T-cell (primary cell): ENCODE measurements at regions of chr17 and their contacts with region 1.

Region 1: GRCh38 chr17:10278213-10278612 is 79.8 kb upstream of the GAS7 start:
- DNase-seq: no peak
- ATAC-seq: no peak
- H3K4me3 ChIP-seq: no peak overlapping the region
- H3K4me3 Mint-ChIP-seq: no peak overlapping the region
- H3K27ac ChIP-seq: no peak overlapping the region
- H3K27ac Mint-ChIP-seq: no peak overlapping the region
- H3K4me1 ChIP-seq: no peaks in the 10 kb centered on the region
- H3K4me1 Mint-ChIP-seq: peaks cover 0 to 14% (median 2%) of the 10 kb centered on the region in 3 donors
- H3K27me3 ChIP-seq: peaks cover 0 to 6% of the 10 kb centered on the region in 2 experiments
- H3K27me3 Mint-ChIP-seq: peaks cover 4 to 17% of the 10 kb centered on the region in 2 donors

Region 2: GRCh38 chr17:9714801-9715200 is 563.4 kb before region 1 on chr17:
- CTCF ChIA-PET with region 1: no interaction called
- POLR2A ChIA-PET with region 1: no interaction called
- DNase-seq: no peak
- ATAC-seq: no peak
- H3K4me3 ChIP-seq: no peak overlapping the region
- H3K4me3 Mint-ChIP-seq: no peak overlapping the region
- H3K27ac ChIP-seq: no peak overlapping the region
- H3K27ac Mint-ChIP-seq: no peak overlapping the region
- H3K4me1 ChIP-seq: no peaks in the 10 kb centered on the region
- H3K4me1 Mint-ChIP-seq: no peaks in the 10 kb centered on the region
- H3K27me3 ChIP-seq: peaks cover 0 to 12% of the 10 kb centered on the region in 2 experiments
- H3K27me3 Mint-ChIP-seq: peaks cover 3 to 6% of the 10 kb centered on the region in 2 donors

Region 3: GRCh38 chr17:10101291-10101690 is 176.9 kb before region 1 on chr17:
- CTCF ChIA-PET with region 1: no interaction called
- POLR2A ChIA-PET with region 1: interaction called in 1 of 2 experiments, 14 read pairs
- DNase-seq: no peak
- ATAC-seq: no peak
- H3K4me3 ChIP-seq: no peak overlapping the region
- H3K4me3 Mint-ChIP-seq: no peak overlapping the region
- H3K27ac ChIP-seq: no peak overlapping the region
- H3K27ac Mint-ChIP-seq: no peak overlapping the region
- H3K4me1 ChIP-seq: no peaks in the 10 kb centered on the region
- H3K4me1 Mint-ChIP-seq: peaks cover 5 to 8% (median 6%) of the 10 kb centered on the region in 3 donors
- H3K27me3 ChIP-seq: peaks cover 0 to 2% of the 10 kb centered on the region in 2 experiments
- H3K27me3 Mint-ChIP-seq: peaks cover 8% of the 10 kb centered on the region in 2 donors

Region 4: GRCh38 chr17:10349403-10349802 is 71.2 kb after region 1 on chr17:
- CTCF ChIA-PET with region 1: no interaction called
- POLR2A ChIA-PET with region 1: no interaction called
- DNase-seq: peak in 1 of 35 experiments; percentile 12
- ATAC-seq: no peak
- H3K4me3 ChIP-seq: no peak overlapping the region
- H3K4me3 Mint-ChIP-seq: no peak overlapping the region
- H3K27ac ChIP-seq: no peak overlapping the region
- H3K27ac Mint-ChIP-seq: no peak overlapping the region
- H3K4me1 ChIP-seq: no peaks in the 10 kb centered on the region
- H3K4me1 Mint-ChIP-seq: no peaks in the 10 kb centered on the region
- H3K27me3 ChIP-seq: no peaks in the 10 kb centered on the region
- H3K27me3 Mint-ChIP-seq: peaks cover 0 to 4% of the 10 kb centered on the region in 2 donors